Activated T-helper 2 cell treated with anti-CD3 and anti-CD28 coated beads, Interferon-gamma antibody, Interleukin-2, Interleukin-4, amounts not matched to agents 10 μg/mL and 5 μg/mL and 100 μg/mL, durations not matched to agents 14 hours and 24 hours and 36 hours (primary cell): ENCODE measurements at regions of chr10 and their contacts with region 1.

Region 1: GRCh38 chr10:3043512-3044368 is 23.6 kb upstream of the PFKP start:
- DNase-seq: no peak
- H3K4me3 Mint-ChIP-seq: no peak overlapping the region
- H3K27ac Mint-ChIP-seq: no peak overlapping the region
- H3K4me1 Mint-ChIP-seq: no peaks in the 10 kb centered on the region
- H3K27me3 Mint-ChIP-seq: peaks cover 8% of the 10 kb centered on the region

Region 2: GRCh38 chr10:2839081-2839725 is 204.5 kb before region 1 on chr10:
- intact Hi-C with region 1: loop called (anchors 1 kb)
- DNase-seq: no peak
- H3K4me3 Mint-ChIP-seq: no peak overlapping the region
- H3K27ac Mint-ChIP-seq: no peak overlapping the region
- H3K4me1 Mint-ChIP-seq: no peaks in the 10 kb centered on the region
- H3K27me3 Mint-ChIP-seq: peaks cover 14% of the 10 kb centered on the region

Region 3: DNA sequence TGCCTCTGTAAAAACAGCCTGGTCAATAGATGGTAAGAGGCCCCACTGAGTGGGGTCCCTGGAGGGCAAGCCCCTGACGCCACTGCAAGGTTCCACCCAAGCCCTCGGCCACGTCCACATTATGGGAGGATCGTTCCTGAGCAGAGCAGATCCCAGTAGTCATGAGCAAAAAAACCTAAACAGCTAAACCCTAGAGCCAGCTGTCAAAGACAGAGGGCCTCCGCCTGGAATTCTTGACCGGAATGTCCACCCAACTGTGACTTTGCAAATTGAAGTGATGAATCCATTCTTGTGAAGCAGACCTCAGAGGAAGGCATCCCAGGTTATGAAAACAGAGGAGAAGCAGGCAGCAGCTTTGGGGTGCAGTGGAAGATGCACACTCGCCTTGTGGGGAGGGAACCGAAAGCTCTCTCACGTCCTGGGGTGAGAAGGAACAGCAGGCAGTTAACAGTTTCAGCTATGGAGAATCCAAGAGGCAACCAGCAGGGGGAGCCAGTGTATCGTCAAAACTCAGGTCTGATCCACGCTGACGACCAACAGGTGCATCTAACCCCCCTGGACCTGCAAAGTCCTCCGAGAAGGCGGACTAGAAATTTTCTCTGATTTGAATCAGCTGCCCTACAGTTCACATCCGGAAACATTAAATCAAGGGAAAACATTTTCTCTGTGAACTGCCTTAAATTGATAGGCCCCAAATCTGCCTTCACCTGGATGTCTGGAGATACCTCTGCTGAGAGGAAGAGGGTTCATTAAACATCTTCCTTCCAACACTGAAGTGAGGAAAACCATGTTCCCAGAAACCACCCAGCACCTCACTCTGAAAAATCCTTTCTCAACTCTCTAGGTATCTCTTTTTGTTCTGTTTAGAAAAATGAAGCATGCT is 115.5 kb before region 1 on chr10:
- intact Hi-C with region 1: loop called (anchors 1 kb)
- DNase-seq: peak; percentile 56
- H3K4me3 Mint-ChIP-seq: no peak overlapping the region
- H3K27ac Mint-ChIP-seq: no peak overlapping the region
- H3K4me1 Mint-ChIP-seq: peaks cover 8% of the 10 kb centered on the region
- H3K27me3 Mint-ChIP-seq: peaks cover 24% of the 10 kb centered on the region

Region 4: DNA sequence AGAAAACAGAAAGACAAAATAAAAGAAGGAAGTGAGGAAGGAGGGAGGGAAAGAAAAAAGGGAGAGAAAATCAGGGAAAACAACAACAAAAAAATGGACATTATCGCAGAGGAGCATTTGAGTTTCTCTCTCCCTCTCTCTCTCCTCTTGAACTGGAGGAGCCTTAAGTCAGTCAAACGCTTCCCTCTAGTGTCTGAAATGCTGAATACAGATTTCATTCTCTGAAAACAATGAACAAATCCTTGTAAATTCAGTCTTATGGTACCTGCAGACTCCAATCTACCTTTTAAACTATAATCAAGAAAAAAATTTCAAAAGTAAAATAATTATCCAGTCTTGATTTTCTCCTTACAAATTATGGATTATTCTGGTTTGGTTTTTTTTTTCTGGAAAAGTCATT is 65.6 kb before region 1 on chr10:
- intact Hi-C with region 1: no loop called
- DNase-seq: no peak
- H3K4me3 Mint-ChIP-seq: no peak overlapping the region
- H3K27ac Mint-ChIP-seq: no peak overlapping the region
- H3K4me1 Mint-ChIP-seq: no peaks in the 10 kb centered on the region
- H3K27me3 Mint-ChIP-seq: peaks cover 4% of the 10 kb centered on the region